Head of caudate nucleus (tissue), 42 donors: ENCODE measurements at regions of chr13 and their contacts with region 1.

Region 1: GRCh38 chr13:41456768-41457588 is at the start of gene RGCC:
- DNase-seq: peak; percentile 72 to 96 (median 89)

Region 2: DNA sequence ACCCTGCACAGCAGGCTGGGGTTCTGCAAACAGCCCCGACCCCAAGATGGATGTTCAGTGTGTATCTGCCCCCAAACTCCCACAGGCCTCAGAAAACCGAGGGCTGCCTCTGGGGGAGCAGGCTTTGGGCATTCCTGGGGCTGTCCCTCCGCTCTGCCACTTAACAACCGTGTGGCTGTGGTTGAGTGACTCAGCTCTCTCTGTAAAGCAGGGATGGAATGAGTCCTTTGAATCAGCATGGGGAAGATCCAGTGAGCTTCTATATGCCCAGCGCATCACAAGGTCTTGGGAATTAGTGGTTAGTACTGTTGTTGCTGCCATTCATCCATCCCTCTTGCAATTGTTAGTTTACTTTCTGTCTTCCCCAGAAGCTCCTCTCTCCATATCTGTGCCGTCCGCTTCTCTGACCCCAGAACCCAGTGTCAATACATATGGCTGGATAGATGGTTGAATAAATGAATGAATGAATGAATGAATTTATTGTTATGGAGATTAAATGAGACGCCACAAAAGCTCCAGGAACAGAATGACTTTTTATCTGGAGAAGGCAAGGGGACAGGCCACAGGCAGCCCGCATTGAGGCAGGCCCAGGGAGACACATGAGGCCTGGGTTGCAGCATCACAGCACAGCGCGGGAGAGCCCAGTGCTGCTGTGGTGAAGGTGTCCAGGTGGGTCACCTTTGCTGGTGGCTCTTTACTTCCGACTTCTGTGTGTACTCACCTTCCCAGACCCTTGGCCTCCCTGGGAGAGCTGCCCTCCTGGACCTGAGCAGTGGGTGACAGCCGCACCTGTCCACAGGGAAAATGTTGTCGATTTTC is 89.6 kb after region 1 on chr13:
- intact Hi-C with region 1: loop called (anchors 5 kb)
- DNase-seq: peak in 3 of 42 donors; percentile 12 to 61 (median 33)

Region 3: GRCh38 chr13:41565221-41565620 is 108.2 kb after region 1 on chr13:
- intact Hi-C with region 1: loop called (anchors 5 kb)
- DNase-seq: peak in 21 of 42 donors; percentile 29 to 79 (median 55)

Region 4: GRCh38 chr13:41649659-41650058 is 192.7 kb after region 1 on chr13:
- intact Hi-C with region 1: loop called (anchors 5 kb)
- DNase-seq: no peak

Region 5: GRCh38 chr13:41891119-41891518 is 434.1 kb after region 1 on chr13:
- intact Hi-C with region 1: no loop called
- DNase-seq: no peak

Region 6: GRCh38 chr13:42859760-42860159 is 1402.8 kb after region 1 on chr13:
- intact Hi-C with region 1: no loop called
- DNase-seq: no peak